ENCODE measurements at regions of chr9 and their contacts with region 1.

Region 1: DNA sequence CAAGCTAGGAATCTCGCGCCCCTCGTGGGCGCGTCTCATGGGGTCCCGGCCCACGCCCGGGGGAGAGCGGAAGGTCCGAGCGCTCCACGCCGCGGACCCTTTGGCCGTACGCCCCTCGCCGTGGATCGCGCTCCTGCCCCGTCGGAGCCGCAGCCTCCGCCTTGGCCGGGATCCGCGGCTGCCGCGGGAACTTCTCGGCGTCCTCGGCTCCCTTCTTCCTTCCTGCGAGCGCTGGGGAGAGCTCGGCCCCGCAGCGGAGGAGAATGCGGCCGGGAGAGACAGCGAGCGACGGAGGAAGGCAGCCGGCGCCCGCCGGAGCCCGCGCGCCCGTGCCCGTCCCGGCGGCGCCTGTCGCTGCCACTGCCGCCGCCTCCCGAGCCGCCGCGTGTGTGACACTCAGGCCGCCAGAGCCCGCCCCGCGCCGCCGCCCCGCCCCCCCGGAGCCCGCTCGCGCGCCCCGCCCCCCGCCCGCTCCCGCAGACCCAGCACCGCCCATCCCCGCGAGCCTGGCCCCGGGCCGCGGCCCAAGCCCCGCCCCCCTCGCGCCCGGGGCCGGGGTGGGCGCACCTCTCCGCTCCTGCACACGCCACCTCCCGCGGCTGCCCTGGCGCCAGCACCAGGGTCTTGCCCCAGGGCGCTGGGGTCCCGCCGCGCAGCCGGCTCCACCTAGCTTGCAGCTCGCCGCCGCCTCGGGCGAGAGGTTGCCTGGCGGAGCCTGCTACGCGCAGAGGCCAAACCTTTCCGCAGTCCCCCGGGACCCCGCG is at the start of gene SHB:
- DNase-seq: peak; percentile 81
- H3K4me3 ChIP-seq: peak within 1 kb of the TSS; percentile 98
- H3K27ac ChIP-seq: peak within 1 kb of the TSS; percentile 92
- H3K4me1 ChIP-seq: peaks cover 13% of the 10 kb centered on the region
- H3K27me3 ChIP-seq: no peaks in the 10 kb centered on the region
- CTCF ChIP-seq: no peak
- total RNA-seq, gene SHB: 17.4 to 24.0 TPM

Region 2: GRCh38 chr9:37812773-37813379 is 256.2 kb before region 1 on chr9:
- intact Hi-C with region 1: no loop called
- DNase-seq: no peak
- H3K4me3 ChIP-seq: no peak overlapping the region
- H3K27ac ChIP-seq: no peak overlapping the region
- H3K4me1 ChIP-seq: no peaks in the 10 kb centered on the region
- H3K27me3 ChIP-seq: no peaks in the 10 kb centered on the region
- CTCF ChIP-seq: no peak

Region 3: DNA sequence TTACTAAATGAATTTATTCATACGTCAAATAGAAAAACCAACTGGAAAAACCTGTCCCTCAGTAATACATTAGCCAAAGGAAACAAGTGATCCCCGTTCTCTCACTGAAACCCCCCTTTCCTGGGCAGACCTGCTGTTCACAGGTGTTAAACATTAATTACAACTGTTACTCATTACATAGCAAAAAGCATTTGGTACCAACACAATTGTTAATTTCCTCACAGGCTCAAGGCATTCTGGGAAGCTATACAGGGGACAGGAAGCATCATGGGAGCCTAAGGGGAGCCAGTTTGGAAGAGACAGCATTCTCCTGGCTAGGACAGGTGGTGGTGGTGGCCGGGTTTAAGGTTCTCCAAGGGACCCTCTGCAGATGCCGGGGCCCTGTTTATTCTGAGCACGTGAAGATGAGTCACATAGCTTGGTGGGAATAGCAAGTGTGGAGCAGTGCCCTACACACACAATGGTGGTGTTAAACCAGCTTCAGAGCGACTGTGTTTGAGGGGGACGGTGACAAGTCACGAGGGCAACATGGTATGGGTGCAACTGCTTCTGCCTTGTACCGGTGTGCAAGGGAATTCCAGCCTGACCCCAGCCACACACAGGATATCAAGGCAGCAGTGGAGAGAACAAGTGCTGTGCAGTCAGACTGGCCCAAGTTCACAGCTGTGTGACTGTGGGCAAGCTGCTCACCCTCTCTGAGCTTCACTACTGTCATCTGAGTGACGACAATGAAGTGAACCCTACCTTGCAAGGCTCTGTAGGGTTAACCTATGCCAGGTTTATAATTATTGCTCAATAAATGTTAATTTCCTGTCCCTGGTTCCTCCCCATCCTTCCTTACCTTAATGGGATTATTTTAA is 102.4 kb before region 1 on chr9:
- intact Hi-C with region 1: loop called (anchors 5 kb)
- DNase-seq: peak; percentile 50
- H3K4me3 ChIP-seq: no peak overlapping the region
- H3K27ac ChIP-seq: peak overlapping the region; percentile 85
- H3K4me1 ChIP-seq: peaks cover 32% of the 10 kb centered on the region
- H3K27me3 ChIP-seq: no peaks in the 10 kb centered on the region
- CTCF ChIP-seq: no peak

Region 4: DNA sequence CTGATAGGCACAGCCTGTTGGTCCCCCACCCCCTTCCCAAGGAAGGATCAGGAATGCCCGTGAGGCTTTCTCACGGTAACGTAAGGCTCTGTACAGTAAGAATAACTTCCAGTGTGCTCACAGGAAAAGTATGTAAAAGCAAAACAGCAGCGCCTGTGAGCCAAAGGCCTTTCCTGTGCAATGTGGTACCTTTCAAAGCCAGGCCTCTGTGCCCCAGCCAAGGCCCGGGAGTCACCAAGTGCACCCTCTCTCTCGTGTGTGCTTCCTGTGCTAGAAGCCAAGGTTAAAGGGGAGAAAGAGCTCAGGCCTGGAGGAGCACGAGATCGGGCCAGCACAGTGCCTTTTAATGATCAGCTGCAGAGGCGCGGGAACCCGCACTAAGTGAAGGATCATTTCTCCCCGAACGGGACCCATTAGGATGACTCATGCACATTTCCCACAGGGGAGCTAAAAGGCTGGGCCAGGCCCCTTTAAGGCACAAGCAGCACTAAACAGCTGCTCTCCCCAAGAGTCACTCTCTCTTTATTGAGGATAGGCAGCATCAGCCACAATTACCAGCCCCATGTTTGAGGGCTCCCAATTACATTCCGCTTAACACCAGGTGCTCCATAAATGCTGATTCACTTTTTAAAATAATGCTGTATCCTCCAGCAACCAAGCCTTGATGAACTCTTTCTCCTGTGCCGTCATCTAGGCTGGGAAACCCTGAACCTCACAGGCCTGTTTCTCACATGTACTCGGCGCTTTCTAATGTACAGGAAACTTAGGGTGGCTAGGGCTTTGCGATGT is 42.8 kb before region 1 on chr9:
- intact Hi-C with region 1: loop called (anchors 2 kb)
- DNase-seq: no peak
- H3K4me3 ChIP-seq: no peak overlapping the region
- H3K27ac ChIP-seq: peak overlapping the region; percentile 37
- H3K4me1 ChIP-seq: peaks cover 13% of the 10 kb centered on the region
- H3K27me3 ChIP-seq: no peaks in the 10 kb centered on the region
- CTCF ChIP-seq: no peak

Region 5: GRCh38 chr9:38154501-38155421 is 85.7 kb after region 1 on chr9:
- intact Hi-C with region 1: no loop called
- DNase-seq: no peak
- H3K4me3 ChIP-seq: no peak overlapping the region
- H3K27ac ChIP-seq: no peak overlapping the region
- H3K4me1 ChIP-seq: no peaks in the 10 kb centered on the region
- H3K27me3 ChIP-seq: no peaks in the 10 kb centered on the region
- CTCF ChIP-seq: no peak